ENCODE measurements at regions of chr14 and their contacts with region 1.

Region 1: DNA sequence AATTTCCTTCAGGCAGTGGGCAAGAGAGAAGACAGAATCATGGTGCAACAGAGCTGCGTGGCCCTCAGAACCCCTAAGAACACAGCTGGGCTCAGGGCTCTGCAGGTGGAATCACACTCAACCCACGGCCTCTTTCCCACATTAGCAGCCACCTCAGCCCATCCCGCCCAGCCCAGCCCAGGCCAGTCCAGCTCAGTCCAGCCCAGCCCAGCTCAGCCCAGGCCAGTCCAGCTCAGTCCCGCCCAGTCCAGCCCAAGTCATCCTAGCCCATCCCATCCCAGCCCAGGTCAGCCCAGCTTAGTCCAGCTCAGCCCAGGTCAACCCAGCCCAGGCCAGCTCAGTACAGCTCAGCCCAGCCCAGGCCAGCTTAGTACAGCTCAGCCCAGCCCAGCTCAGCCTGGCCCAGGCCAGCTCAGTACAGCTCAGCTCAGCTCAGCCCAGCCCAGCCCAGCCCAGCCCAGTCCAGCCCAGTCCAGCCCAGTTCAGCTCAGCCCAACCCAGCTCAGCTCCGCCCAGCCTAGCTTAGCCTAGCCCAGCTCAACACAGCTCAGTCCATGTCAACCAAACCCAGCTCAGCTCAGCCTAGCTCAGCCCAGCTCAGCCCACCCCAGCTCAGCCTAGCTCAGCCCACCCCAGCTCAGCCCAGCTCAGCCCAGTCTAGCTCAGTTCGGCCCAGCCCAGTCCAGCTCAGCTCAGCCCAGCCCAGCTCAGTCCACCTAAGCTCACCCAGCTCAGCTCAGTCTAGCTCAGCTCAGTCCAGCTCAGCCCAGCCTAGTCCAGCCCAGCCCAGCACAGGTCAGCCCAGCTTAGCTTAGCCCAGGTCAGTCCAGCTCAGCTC is 183.1 kb downstream of the TMEM121 start:
- DNase-seq: no peak
- H3K4me3 ChIP-seq: no peak overlapping the region
- H3K27ac ChIP-seq: no peak overlapping the region
- H3K4me1 ChIP-seq: no peaks in the 10 kb centered on the region
- H3K27me3 ChIP-seq: no peaks in the 10 kb centered on the region
- CTCF ChIP-seq: no peak
- EP300 ChIP-seq: no peak
- POLR2A ChIP-seq: no peak

Region 2: GRCh38 chr14:105589161-105590062 is 120.1 kb before region 1 on chr14:
- intact Hi-C with region 1: loop called in 3 of 4 experiments (anchors 5 kb)
- DNase-seq: no peak
- H3K4me3 ChIP-seq: no peak overlapping the region
- H3K27ac ChIP-seq: no peak overlapping the region
- H3K4me1 ChIP-seq: no peaks in the 10 kb centered on the region
- H3K27me3 ChIP-seq: no peaks in the 10 kb centered on the region
- CTCF ChIP-seq: no peak
- EP300 ChIP-seq: no peak
- POLR2A ChIP-seq: no peak

Region 3: GRCh38 chr14:105732748-105733622 is 23.5 kb after region 1 on chr14:
- intact Hi-C with region 1: no loop called
- DNase-seq: no peak
- H3K4me3 ChIP-seq: no peak overlapping the region
- H3K27ac ChIP-seq: no peak overlapping the region
- H3K4me1 ChIP-seq: no peaks in the 10 kb centered on the region
- H3K27me3 ChIP-seq: no peaks in the 10 kb centered on the region
- CTCF ChIP-seq: no peak
- EP300 ChIP-seq: no peak
- POLR2A ChIP-seq: no peak